ENCODE measurements at regions of chr7 and their contacts with region 1.

Region 1: GRCh38 chr7:33185786-33186185 is 56.4 kb downstream of the BBS9 start:
- DNase-seq: peak; percentile 9
- ATAC-seq: no peak
- H3K4me3 Mint-ChIP-seq: no peak overlapping the region
- H3K27ac Mint-ChIP-seq: no peak overlapping the region
- H3K4me1 Mint-ChIP-seq: peaks cover 5% of the 10 kb centered on the region
- H3K27me3 Mint-ChIP-seq: no peaks in the 10 kb centered on the region

Region 2: GRCh38 chr7:33757562-33758165 is 571.9 kb after region 1 on chr7:
- CTCF ChIA-PET with region 1: no interaction called
- POLR2A ChIA-PET with region 1: no interaction called
- intact Hi-C with region 1: loop called in 1 of 2 experiments (anchors 5 kb)
- DNase-seq: peak; percentile 43
- ATAC-seq: no peak
- H3K4me3 Mint-ChIP-seq: no peak overlapping the region
- H3K27ac Mint-ChIP-seq: no peak overlapping the region
- H3K4me1 Mint-ChIP-seq: no peaks in the 10 kb centered on the region
- H3K27me3 Mint-ChIP-seq: no peaks in the 10 kb centered on the region